Caco-2 (cell line): ENCODE measurements at regions of chr20 and their contacts with region 1.

Region 1: DNA sequence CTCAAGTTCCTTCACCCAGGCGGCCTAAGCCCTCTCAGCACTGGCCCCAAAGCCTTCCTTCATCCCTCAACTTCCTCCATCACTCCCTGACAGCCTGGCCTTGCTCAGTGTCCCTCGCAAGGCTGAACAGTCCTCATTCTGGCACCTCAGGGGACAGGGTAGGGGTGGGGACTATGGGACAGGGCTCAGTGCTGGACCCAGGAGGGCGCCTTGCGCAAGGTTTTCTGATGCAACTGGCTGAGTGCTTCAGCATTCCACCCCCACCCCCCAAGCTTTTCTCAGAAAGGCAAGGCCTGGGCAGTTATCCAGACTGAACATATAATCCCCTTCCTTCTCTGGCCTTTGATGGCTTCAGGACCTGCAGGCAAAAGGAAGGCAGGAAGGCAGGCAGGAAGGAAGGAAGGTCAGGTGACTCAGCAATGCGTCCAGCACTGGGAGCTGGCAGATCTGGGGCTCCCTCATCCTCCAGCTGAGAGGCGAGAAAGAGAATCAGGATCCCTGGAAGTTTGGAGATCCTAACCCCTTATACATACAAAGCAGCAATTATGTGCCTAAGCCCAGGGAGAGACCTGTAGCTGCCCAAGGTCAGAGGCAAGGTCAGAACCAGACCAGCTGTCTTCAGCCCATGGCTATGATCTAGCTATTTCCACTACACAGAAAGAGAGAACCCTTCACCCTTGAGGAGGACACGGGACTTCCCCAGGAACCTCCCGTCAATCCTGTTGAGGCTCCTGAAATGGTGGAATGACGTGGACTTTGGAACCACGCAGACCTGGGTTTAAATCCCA is 8.6 kb upstream of the TRIB3 start:
- DNase-seq: peak; percentile 96 to 98
- H3K4me3 ChIP-seq: no peak overlapping the region
- H3K4me3 Mint-ChIP-seq: peak overlapping the region; percentile 66
- H3K27ac Mint-ChIP-seq: peak overlapping the region; percentile 99
- H3K4me1 ChIP-seq: peaks cover 68% of the 10 kb centered on the region
- H3K4me1 Mint-ChIP-seq: peaks cover 60% of the 10 kb centered on the region
- H3K27me3 ChIP-seq: no peaks in the 10 kb centered on the region
- H3K27me3 Mint-ChIP-seq: no peaks in the 10 kb centered on the region
- CTCF ChIP-seq: no peak

Region 2: GRCh38 chr20:258963-259362 is 113.0 kb before region 1 on chr20:
- CTCF ChIA-PET with region 1: no interaction called
- POLR2A ChIA-PET with region 1: no interaction called
- intact Hi-C with region 1: no loop called
- DNase-seq: peak in 1 of 2 experiments; percentile 22
- H3K4me3 ChIP-seq: no peak overlapping the region
- H3K4me3 Mint-ChIP-seq: no peak overlapping the region
- H3K27ac Mint-ChIP-seq: no peak overlapping the region
- H3K4me1 ChIP-seq: no peaks in the 10 kb centered on the region; the same call in 1 of the 2 replicates
- H3K4me1 Mint-ChIP-seq: no peaks in the 10 kb centered on the region
- H3K27me3 ChIP-seq: no peaks in the 10 kb centered on the region
- H3K27me3 Mint-ChIP-seq: no peaks in the 10 kb centered on the region
- CTCF ChIP-seq: peak in 1 of 2 experiments; percentile 38

Region 3: GRCh38 chr20:354298-355064 is 17.5 kb before region 1 on chr20:
- CTCF ChIA-PET with region 1: interaction called, 6 read pairs
- POLR2A ChIA-PET with region 1: interaction called, 8 read pairs
- intact Hi-C with region 1: loop called (anchors 2 kb)
- DNase-seq: peak; percentile 82 to 89
- H3K4me3 ChIP-seq: no peak overlapping the region
- H3K4me3 Mint-ChIP-seq: no peak overlapping the region
- H3K27ac Mint-ChIP-seq: peak overlapping the region; percentile 63
- H3K4me1 ChIP-seq: peaks cover 26% of the 10 kb centered on the region
- H3K4me1 Mint-ChIP-seq: peaks cover 23% of the 10 kb centered on the region
- H3K27me3 ChIP-seq: no peaks in the 10 kb centered on the region
- H3K27me3 Mint-ChIP-seq: no peaks in the 10 kb centered on the region
- CTCF ChIP-seq: peak; percentile 95 to 97